Breast epithelium (tissue), 4 donors: ENCODE measurements at regions of chr12 and their contacts with region 1.

Region 1: DNA sequence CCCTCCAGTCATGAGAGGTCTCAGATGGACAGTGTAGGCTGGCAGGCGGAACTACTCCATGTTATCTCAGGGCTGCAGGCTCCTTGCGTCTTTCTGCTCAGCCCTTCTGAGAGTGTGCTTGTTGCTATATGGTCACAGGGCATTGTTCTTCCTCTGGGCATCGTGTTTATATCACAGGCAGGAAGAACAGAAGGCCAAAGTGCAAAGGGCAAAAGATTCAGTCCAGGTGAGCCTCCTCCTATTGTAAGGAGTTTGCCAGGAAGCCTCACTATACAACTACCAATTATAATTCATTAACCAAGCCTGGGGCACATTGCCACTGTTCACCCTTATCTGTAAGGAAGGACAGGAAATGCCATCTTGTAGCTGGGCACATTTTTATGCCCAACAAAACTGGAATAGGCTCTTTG is 195.5 kb upstream of the KITLG start:
- DNase-seq: no peak
- H3K4me3 ChIP-seq: no peak overlapping the region
- H3K27ac ChIP-seq: no peak overlapping the region
- H3K4me1 ChIP-seq: no peaks in the 10 kb centered on the region
- H3K27me3 ChIP-seq: no peaks in the 10 kb centered on the region
- CTCF ChIP-seq: no peak
- POLR2A ChIP-seq: no peak

Region 2: DNA sequence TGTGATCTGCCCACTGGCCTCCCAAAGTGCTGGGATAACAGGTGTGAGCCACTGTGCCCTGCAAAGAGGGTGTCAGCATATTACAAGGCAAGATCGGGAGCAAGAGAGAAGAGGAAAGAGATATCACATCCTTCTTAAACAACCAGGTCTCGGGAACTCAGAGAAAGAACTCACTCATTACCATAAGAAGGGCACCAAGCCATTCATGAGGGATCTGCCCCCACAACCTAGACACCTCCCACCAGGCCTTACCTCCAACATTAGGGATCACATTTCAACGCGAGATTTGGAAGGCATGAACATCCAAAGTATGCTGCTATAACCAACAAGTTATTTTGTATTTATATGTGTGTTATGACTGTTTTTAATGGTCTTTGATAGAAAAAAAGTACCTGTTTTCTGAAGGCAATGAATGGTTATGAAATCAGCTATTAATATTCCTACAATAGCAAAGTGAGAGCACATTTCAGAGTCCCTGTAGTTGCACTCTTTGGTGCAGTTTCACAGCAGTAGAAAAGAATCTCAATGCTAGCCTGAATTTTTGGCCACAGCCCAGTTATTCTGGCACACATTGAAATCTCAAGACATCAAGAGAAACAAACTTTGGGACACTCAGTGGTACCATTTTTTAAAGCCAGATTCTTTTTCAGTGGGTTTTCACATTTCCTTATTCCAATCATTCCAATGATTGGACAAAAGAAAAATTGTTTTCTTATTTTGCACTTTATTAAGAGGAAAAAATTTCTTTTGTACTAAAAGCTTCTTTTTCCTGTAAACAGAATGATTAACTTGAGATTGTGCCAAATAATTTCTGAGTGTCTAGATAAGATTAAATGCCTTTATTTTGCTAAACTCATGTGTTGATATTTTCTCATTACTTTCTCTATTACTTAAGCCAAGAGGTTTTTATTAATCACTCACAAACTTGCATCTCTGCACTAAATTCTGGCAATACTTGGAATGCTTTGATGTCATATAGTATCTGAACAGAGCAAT is 1515.5 kb after region 1 on chr12:
- intact Hi-C with region 1: loop called (anchors 5 kb)
- DNase-seq: no peak
- H3K4me3 ChIP-seq: no peak overlapping the region
- H3K27ac ChIP-seq: no peak overlapping the region
- H3K4me1 ChIP-seq: no peaks in the 10 kb centered on the region
- H3K27me3 ChIP-seq: no peaks in the 10 kb centered on the region
- CTCF ChIP-seq: no peak
- POLR2A ChIP-seq: no peak